ENCODE measurements at regions of chr6 and their contacts with region 1.

Region 1: GRCh38 chr6:130697995-130698535 is 129.1 kb upstream of the SMLR1 start:
- DNase-seq: peak; percentile 48 to 71 (median 70)
- H3K4me3 ChIP-seq: no peak overlapping the region
- H3K27ac ChIP-seq: no peak overlapping the region
- H3K4me1 ChIP-seq: peaks cover 0 to 10% (median 3%) of the 10 kb centered on the region in 4 experiments
- H3K27me3 ChIP-seq: peaks cover 0 to 4% (median 0%) of the 10 kb centered on the region in 5 experiments

Region 2: GRCh38 chr6:130716466-130716865 is 18.4 kb after region 1 on chr6:
- CTCF ChIA-PET with region 1: interaction called, 12 read pairs
- POLR2A ChIA-PET with region 1: no interaction called
- DNase-seq: no peak
- H3K4me3 ChIP-seq: no peak overlapping the region
- H3K27ac ChIP-seq: no peak overlapping the region
- H3K4me1 ChIP-seq: peaks cover 0 to 15% (median 7%) of the 10 kb centered on the region in 4 experiments
- H3K27me3 ChIP-seq: peaks cover 0 to 75% (median 45%) of the 10 kb centered on the region in 5 experiments

Region 3: GRCh38 chr6:131225127-131225526 is 527.1 kb after region 1 on chr6:
- CTCF ChIA-PET with region 1: no interaction called
- POLR2A ChIA-PET with region 1: no interaction called
- DNase-seq: peak in 2 of 3 donors; percentile 30 to 33
- H3K4me3 ChIP-seq: no peak overlapping the region
- H3K27ac ChIP-seq: no peak overlapping the region
- H3K4me1 ChIP-seq: peaks cover 0 to 5% (median 0%) of the 10 kb centered on the region in 4 experiments
- H3K27me3 ChIP-seq: no peaks in the 10 kb centered on the region